OCI-LY7 (cell line): ENCODE measurements at regions of chr7 and their contacts with region 1.

Region 1: DNA sequence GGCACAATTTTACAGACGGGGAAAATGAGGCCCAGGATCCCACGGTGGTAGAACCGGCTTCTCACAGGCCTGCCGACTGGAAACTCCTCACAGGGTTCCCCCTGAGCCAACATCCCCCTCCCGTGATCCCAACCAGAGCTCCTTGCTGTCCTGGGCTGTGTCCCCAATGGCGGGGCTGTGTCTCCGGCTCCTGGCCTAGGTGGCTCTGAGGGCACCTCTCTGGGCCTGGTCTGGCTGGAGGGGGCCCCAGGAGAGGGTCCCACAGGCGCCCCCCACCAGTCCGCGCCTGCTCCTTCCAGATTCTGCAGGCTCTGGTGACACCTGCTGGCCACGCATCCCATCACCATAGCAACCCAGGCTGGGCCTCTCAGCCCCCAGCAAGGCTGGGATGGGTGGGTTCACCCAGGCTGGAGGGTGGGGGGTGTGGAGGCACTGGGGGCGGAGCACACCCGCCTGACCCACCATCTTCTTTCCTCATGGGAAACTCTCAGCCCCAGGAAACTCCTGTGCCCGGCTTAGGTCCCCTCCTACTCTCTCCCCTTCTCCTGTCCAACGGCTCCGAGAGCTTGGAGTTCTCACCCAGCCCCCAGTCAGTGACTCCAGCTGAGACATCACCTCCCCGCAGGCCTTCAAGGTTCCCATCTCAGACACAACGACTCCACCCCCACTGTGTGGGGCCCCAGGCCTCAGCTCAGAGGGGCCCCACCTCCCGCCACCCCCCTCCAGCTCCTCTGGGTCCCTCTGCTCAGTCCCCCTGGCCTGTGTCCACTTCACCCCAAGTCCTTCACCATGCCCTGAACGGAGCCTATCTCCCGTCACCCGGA is 27.1 kb upstream of the TNRC18 start:
- DNase-seq: peak; percentile 67
- H3K4me3 ChIP-seq: no peak overlapping the region
- H3K27ac ChIP-seq: no peak overlapping the region
- H3K4me1 ChIP-seq: no peaks in the 10 kb centered on the region
- CTCF ChIP-seq: peak; percentile 81

Region 2: GRCh38 chr7:5248201-5248885 is 202.4 kb before region 1 on chr7:
- CTCF ChIA-PET with region 1: no interaction called
- POLR2A ChIA-PET with region 1: no interaction called
- intact Hi-C with region 1: loop called (anchors 10 kb)
- DNase-seq: no peak
- H3K4me3 ChIP-seq: no peak overlapping the region
- H3K27ac ChIP-seq: no peak overlapping the region
- H3K4me1 ChIP-seq: no peaks in the 10 kb centered on the region
- CTCF ChIP-seq: no peak

Region 3: GRCh38 chr7:5363729-5364128 is 87.0 kb before region 1 on chr7:
- CTCF ChIA-PET with region 1: interaction called, 4 read pairs
- POLR2A ChIA-PET with region 1: no interaction called
- intact Hi-C with region 1: loop called (anchors 1 kb)
- DNase-seq: no peak
- H3K4me3 ChIP-seq: no peak overlapping the region
- H3K27ac ChIP-seq: no peak overlapping the region
- H3K4me1 ChIP-seq: peaks cover 5% of the 10 kb centered on the region
- CTCF ChIP-seq: no peak

Region 4: GRCh38 chr7:5470816-5471215 is 20.1 kb after region 1 on chr7:
- CTCF ChIA-PET with region 1: no interaction called
- POLR2A ChIA-PET with region 1: no interaction called
- intact Hi-C with region 1: no loop called
- DNase-seq: no peak
- H3K4me3 ChIP-seq: no peak overlapping the region
- H3K27ac ChIP-seq: no peak overlapping the region
- H3K4me1 ChIP-seq: no peaks in the 10 kb centered on the region
- CTCF ChIP-seq: no peak